ENCODE measurements at regions of chr2 and their contacts with region 1.

Region 1: GRCh38 chr2:44087036-44087713 is 81.5 kb upstream of the PPM1B start:
- DNase-seq: peak; percentile 87
- CTCF ChIP-seq: peak; percentile 87

Region 2: GRCh38 chr2:44075541-44075940 is 11.6 kb before region 1 on chr2:
- CTCF ChIA-PET with region 1: interaction called, 20 read pairs
- POLR2A ChIA-PET with region 1: no interaction called
- DNase-seq: no peak
- CTCF ChIP-seq: no peak

Region 3: GRCh38 chr2:44100351-44100750 is 13.2 kb after region 1 on chr2:
- CTCF ChIA-PET with region 1: interaction called, 10 read pairs
- POLR2A ChIA-PET with region 1: interaction called, 3 read pairs
- DNase-seq: no peak
- CTCF ChIP-seq: no peak

Region 4: DNA sequence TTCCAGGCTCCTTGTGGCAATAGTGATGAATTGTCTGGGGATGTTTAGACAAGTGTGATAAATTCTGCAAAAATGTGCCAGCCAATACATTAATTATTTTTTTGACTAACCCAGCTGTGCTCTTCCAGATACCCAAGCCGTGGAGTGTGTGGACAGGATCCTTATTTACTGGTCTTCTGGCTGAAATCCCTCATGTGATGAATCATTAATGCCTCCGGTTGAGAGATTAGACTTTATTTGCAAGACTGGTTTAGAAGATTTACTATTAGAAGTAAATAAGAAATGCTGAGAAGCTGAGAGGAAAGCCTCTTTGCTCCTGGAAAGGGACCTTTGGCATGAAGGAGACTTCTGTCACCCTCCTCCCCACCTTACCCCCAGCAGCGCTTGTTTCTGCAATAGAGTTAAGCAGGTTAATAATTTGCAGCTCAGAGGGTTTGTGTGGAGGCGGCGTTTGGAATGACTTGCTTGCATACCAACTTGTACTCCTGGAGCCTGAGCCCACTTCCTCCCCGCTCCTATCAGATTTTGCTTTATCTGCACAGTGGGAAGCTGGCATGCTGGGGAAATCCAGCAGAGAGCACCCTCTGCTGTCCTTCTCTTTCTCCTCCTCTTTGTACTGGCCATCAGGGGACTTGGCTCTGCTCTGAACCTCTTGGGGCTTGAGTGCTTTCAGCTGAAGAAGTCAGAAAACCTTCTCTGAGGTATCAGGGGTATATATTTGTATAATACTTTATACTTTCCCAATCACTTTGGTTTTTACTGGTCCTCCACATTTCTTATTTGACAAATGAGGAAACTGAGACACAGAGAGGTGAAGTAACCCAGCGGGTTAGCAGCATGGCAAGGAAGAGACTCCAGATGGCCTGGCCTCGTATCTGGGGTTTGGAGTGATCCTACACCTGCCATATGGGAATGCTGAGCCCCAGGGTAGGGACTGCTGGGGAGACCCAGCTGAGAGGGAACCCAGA is 204.4 kb after region 1 on chr2:
- CTCF ChIA-PET with region 1: interaction called, 16 read pairs
- POLR2A ChIA-PET with region 1: no interaction called
- DNase-seq: no peak
- CTCF ChIP-seq: peak; percentile 33

Measured in GM10248 (cell line).